ENCODE measurements at regions of chr1 and their contacts with region 1.

Region 1: DNA sequence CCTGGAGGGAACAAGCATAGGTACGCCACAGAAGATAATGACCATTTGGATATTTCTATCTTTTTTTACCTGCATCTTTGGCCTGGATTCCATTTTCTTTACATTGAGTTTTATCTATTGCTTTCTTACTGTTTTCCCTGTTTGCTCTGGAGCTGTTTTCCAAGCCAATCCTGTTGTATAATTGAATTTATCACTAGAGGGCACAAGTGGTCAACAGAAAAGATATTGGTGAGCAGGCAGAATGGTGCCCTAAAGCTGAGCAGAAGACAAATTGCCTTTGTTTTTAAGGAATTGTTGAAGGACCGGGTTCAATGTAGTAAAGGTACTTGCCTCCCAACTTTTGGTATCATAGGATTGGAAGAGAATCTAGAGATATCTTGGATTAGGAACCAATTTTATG is 152.8 kb downstream of the PPP1R12B start:
- DNase-seq: peak in 3 of 4 experiments; percentile 13 to 47 (median 17)
- ATAC-seq: peak; percentile 86
- H3K4me3 ChIP-seq: no peak overlapping the region
- H3K27ac ChIP-seq: no peak overlapping the region
- H3K4me1 ChIP-seq: no peaks in the 10 kb centered on the region
- H3K27me3 ChIP-seq: no peaks in the 10 kb centered on the region
- CTCF ChIP-seq: peak; percentile 47 to 76 (median 54); a peak in 3 of 6 replicates
- EP300 ChIP-seq: no peak
- POLR2A ChIP-seq: no peak
- RAD21 ChIP-seq: peak; percentile 94 to 96

Region 2: GRCh38 chr1:202565890-202566602 is 64.8 kb after region 1 on chr1:
- CTCF ChIA-PET with region 1: interaction called, 22 read pairs
- POLR2A ChIA-PET with region 1: no interaction called
- in situ Hi-C with region 1: loop called (anchors 5 kb)
- intact Hi-C with region 1: loop called (anchors 1 kb)
- DNase-seq: no peak
- ATAC-seq: no peak
- H3K4me3 ChIP-seq: no peak overlapping the region
- H3K27ac ChIP-seq: no peak overlapping the region
- H3K4me1 ChIP-seq: no peaks in the 10 kb centered on the region
- H3K27me3 ChIP-seq: no peaks in the 10 kb centered on the region
- CTCF ChIP-seq: peak in 1 of 3 experiments; percentile 31; a peak in 2 of 6 replicates
- EP300 ChIP-seq: no peak
- POLR2A ChIP-seq: no peak
- RAD21 ChIP-seq: peak in 1 of 2 experiments; percentile 20; a peak in 1 of 4 replicates

Region 3: GRCh38 chr1:202571347-202572339 is 70.4 kb after region 1 on chr1:
- CTCF ChIA-PET with region 1: interaction called, 22 read pairs
- POLR2A ChIA-PET with region 1: no interaction called
- in situ Hi-C with region 1: loop called (anchors 5 kb)
- intact Hi-C with region 1: loop called (anchors 1 kb)
- DNase-seq: peak; percentile 63 to 72 (median 68)
- ATAC-seq: peak; percentile 91
- H3K4me3 ChIP-seq: no peak overlapping the region
- H3K27ac ChIP-seq: no peak overlapping the region
- H3K4me1 ChIP-seq: no peaks in the 10 kb centered on the region
- H3K27me3 ChIP-seq: no peaks in the 10 kb centered on the region
- CTCF ChIP-seq: peak; percentile 87 to 96 (median 90)
- EP300 ChIP-seq: no peak
- POLR2A ChIP-seq: no peak
- RAD21 ChIP-seq: peak; percentile 98

Region 4: GRCh38 chr1:202599677-202600431 is 98.6 kb after region 1 on chr1:
- CTCF ChIA-PET with region 1: interaction called, 17 read pairs
- POLR2A ChIA-PET with region 1: no interaction called
- in situ Hi-C with region 1: no loop called
- intact Hi-C with region 1: loop called (anchors 10 kb)
- DNase-seq: peak; percentile 74 to 79 (median 75)
- ATAC-seq: peak; percentile 96
- H3K4me3 ChIP-seq: no peak overlapping the region
- H3K27ac ChIP-seq: no peak overlapping the region
- H3K4me1 ChIP-seq: no peaks in the 10 kb centered on the region
- H3K27me3 ChIP-seq: peaks cover 2 to 35% of the 10 kb centered on the region in 2 experiments; a peak in 3 of 5 replicates
- CTCF ChIP-seq: peak; percentile 87 to 91 (median 88)
- EP300 ChIP-seq: no peak
- POLR2A ChIP-seq: no peak
- RAD21 ChIP-seq: peak; percentile 87 to 92

Region 5: GRCh38 chr1:202710070-202711045 is 209.1 kb after region 1 on chr1 and contains the start of gene SYT2:
- CTCF ChIA-PET with region 1: no interaction called
- POLR2A ChIA-PET with region 1: no interaction called
- in situ Hi-C with region 1: loop called (anchors 25 kb)
- intact Hi-C with region 1: no loop called
- DNase-seq: peak; percentile 32 to 81 (median 58)
- ATAC-seq: peak; percentile 74
- H3K4me3 ChIP-seq: no peak within 1 kb of the TSS
- H3K27ac ChIP-seq: no peak within 1 kb of the TSS
- H3K4me1 ChIP-seq: peaks cover 0 to 16% of the 10 kb centered on the region in 2 experiments; a peak in 2 of 5 replicates
- H3K27me3 ChIP-seq: peaks cover 68 to 84% of the 10 kb centered on the region in 2 experiments
- CTCF ChIP-seq: no peak
- EP300 ChIP-seq: no peak
- POLR2A ChIP-seq: no peak
- RAD21 ChIP-seq: no peak
- polyA plus RNA-seq, gene SYT2: not detected